Posterior vena cava (tissue), 2 donors: ENCODE measurements at regions of chr2 and their contacts with region 1.

Region 1: GRCh38 chr2:134262684-134263083 is 8.8 kb downstream of the MGAT5 start:
- DNase-seq: no peak

Region 2: DNA sequence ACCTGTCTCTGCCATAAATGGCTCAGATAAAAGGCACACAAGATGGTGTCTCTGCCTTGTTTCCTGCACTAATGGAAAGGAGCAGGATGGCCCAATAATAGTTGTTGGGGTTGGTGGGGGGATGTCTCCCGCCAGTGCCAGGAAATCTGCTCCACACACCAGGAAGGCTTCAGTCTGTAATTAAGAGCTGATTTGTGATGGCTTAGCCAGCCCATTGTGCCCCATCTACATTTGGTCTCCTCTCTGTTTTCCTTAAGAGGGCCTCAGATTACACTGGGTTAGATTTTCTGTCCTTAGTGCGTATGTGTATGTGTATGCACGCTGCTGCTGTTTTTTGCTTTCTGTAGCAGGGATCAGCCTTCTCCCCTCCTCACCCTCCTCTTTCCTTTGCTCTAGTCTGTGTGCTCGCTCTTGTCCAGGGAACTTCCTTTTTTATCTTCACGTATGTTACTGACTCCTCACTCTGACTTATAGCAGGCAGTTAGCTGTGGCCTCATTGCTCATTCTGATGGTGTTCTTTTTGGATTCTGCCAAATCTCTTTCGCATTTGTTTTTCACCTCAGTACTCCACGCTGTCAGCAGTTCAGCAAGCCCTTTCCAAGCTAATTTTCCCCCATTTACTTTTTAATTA is 42.2 kb before region 1 on chr2:
- intact Hi-C with region 1: loop called in 1 of 2 experiments (anchors 1 kb)
- DNase-seq: no peak

Region 3: GRCh38 chr2:134275058-134275862 is 12.6 kb after region 1 on chr2:
- intact Hi-C with region 1: no loop called
- DNase-seq: no peak